ENCODE measurements at regions of chr11 and their contacts with region 1.

Region 1: GRCh38 chr11:68459886-68460740 is 439 bp upstream of the PPP6R3 start:
- DNase-seq: peak; percentile 90 to 97 (median 96)
- ATAC-seq: peak; percentile 95
- H3K4me3 ChIP-seq: peak overlapping the region; percentile 86
- H3K4me3 Mint-ChIP-seq: peak overlapping the region; percentile 81 to 98 (median 96)
- H3K27ac ChIP-seq: peak overlapping the region; percentile 90
- H3K27ac Mint-ChIP-seq: peak overlapping the region; percentile 92 to 99 (median 99)
- H3K4me1 ChIP-seq: peaks cover 19 to 26% of the 10 kb centered on the region in 2 donors
- H3K4me1 Mint-ChIP-seq: peaks cover 26 to 45% (median 31%) of the 10 kb centered on the region in 7 donors
- H3K27me3 ChIP-seq: no peaks in the 10 kb centered on the region
- H3K27me3 Mint-ChIP-seq: peaks cover 0 to 2% (median 0%) of the 10 kb centered on the region in 5 donors

Region 2: DNA sequence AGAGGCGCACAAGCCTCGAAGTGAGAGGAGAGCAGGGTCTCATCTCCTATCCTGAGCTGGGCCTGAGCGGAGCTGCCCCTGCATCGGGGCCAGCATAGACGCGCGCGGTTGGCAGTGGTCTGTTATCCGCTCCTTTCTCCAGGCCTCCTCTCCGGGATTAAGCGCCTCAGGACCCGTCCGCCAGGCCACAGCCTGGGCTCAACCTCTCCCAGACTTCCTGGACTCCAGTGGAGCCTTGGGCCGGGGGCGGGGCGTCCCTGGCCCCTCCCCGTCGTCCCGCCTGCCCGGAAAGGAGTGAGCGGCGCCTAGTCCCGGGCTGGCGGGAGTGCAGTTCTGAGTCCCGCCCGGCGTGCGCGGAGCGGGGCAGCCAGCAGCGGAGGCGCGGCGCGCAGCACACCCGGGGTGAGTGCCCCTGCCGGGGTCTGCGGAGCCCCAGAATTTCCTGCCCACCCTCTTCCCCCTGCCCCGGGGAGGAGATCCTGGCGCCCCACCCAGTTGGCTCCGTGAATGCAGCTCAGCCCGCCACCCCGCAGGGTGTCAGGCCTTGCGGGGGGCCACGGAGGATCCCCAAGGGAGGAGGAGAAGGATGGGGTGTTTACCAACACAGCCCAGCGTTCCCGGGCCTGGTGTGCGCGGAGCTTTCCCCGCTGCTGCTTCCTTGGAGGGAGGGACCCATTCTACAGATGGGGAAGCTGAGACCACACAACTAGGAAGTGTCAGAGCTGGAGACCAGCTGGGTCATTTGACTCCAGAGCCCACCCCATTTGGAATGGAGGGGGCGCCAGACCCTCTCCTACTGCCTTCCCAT is 421.2 kb before region 1 on chr11 and contains the start of gene TCIRG1:
- CTCF ChIA-PET with region 1: no interaction called
- POLR2A ChIA-PET with region 1: no interaction called
- intact Hi-C with region 1: loop called in 1 of 2 experiments (anchors 1 kb)
- DNase-seq: peak in 8 of 9 donors; percentile 28 to 72 (median 41)
- ATAC-seq: peak; percentile 53
- H3K4me3 ChIP-seq: peak within 1 kb of the TSS; percentile 84
- H3K4me3 Mint-ChIP-seq: peak within 1 kb of the TSS; percentile 87 to 94 (median 90)
- H3K27ac ChIP-seq: peak within 1 kb of the TSS; percentile 88
- H3K27ac Mint-ChIP-seq: peak within 1 kb of the TSS; percentile 92 to 98 (median 94)
- H3K4me1 ChIP-seq: peaks cover 8 to 20% of the 10 kb centered on the region in 2 donors
- H3K4me1 Mint-ChIP-seq: peaks cover 14 to 30% (median 25%) of the 10 kb centered on the region in 7 donors
- H3K27me3 ChIP-seq: no peaks in the 10 kb centered on the region
- H3K27me3 Mint-ChIP-seq: no peaks in the 10 kb centered on the region
- total RNA-seq, gene TCIRG1: 164 to 381 (median 194) TPM

Region 3: GRCh38 chr11:68271781-68272608 is 188.1 kb before region 1 on chr11 and contains the start of gene C11orf24:
- CTCF ChIA-PET with region 1: no interaction called
- POLR2A ChIA-PET with region 1: no interaction called
- intact Hi-C with region 1: loop called (anchors 1 kb)
- DNase-seq: peak; percentile 87 to 98 (median 90)
- ATAC-seq: peak; percentile 94
- H3K4me3 ChIP-seq: peak within 1 kb of the TSS; percentile 77
- H3K4me3 Mint-ChIP-seq: peak within 1 kb of the TSS; percentile 88 to 99 (median 94)
- H3K27ac ChIP-seq: peak within 1 kb of the TSS; percentile 94
- H3K27ac Mint-ChIP-seq: peak within 1 kb of the TSS; percentile 94 to 99 (median 96)
- H3K4me1 ChIP-seq: peaks cover 11 to 12% of the 10 kb centered on the region in 2 donors
- H3K4me1 Mint-ChIP-seq: peaks cover 23 to 50% (median 44%) of the 10 kb centered on the region in 7 donors
- H3K27me3 ChIP-seq: no peaks in the 10 kb centered on the region
- H3K27me3 Mint-ChIP-seq: no peaks in the 10 kb centered on the region
- total RNA-seq, gene C11orf24: 9.5 to 20.0 (median 15.4) TPM

Region 4: GRCh38 chr11:68436985-68437926 is 22.9 kb before region 1 on chr11:
- CTCF ChIA-PET with region 1: no interaction called
- POLR2A ChIA-PET with region 1: no interaction called
- intact Hi-C with region 1: no loop called
- DNase-seq: no peak
- ATAC-seq: peak; percentile 68
- H3K4me3 ChIP-seq: no peak overlapping the region
- H3K4me3 Mint-ChIP-seq: no peak overlapping the region
- H3K27ac ChIP-seq: no peak overlapping the region
- H3K27ac Mint-ChIP-seq: no peak overlapping the region
- H3K4me1 ChIP-seq: no peaks in the 10 kb centered on the region
- H3K4me1 Mint-ChIP-seq: peaks cover 0 to 4% (median 0%) of the 10 kb centered on the region in 7 donors
- H3K27me3 ChIP-seq: no peaks in the 10 kb centered on the region
- H3K27me3 Mint-ChIP-seq: no peaks in the 10 kb centered on the region

Region 5: DNA sequence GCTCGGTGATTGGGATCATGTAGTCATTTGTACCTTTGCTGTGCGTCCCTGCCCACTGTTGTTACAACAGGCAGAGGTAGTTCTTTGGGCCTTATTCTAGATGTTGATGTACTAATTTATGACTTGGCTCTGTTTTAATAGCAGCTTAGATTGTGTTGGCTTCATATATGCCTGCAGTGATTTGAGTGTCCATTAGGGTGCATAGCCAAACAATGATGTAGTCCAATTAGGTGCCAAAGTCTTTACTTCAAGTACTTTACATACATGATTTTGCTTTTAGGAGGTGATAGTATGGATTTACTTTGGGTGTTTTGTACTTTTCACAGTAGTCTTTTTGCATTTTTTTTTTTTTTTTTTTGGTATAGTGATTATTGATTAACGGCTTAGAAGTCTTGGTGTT is 46.8 kb after region 1 on chr11:
- CTCF ChIA-PET with region 1: no interaction called
- POLR2A ChIA-PET with region 1: no interaction called
- intact Hi-C with region 1: loop called in 1 of 2 experiments (anchors 5 kb)
- DNase-seq: no peak
- ATAC-seq: no peak
- H3K4me3 ChIP-seq: no peak overlapping the region
- H3K4me3 Mint-ChIP-seq: peak overlapping the region in 9 of 10 donors; percentile 1 to 59 (median 38)
- H3K27ac ChIP-seq: no peak overlapping the region
- H3K27ac Mint-ChIP-seq: peak overlapping the region in 6 of 9 donors; percentile 10 to 82 (median 56)
- H3K4me1 ChIP-seq: peaks cover 0 to 32% of the 10 kb centered on the region in 2 donors
- H3K4me1 Mint-ChIP-seq: peaks cover 52 to 94% (median 84%) of the 10 kb centered on the region in 7 donors
- H3K27me3 ChIP-seq: no peaks in the 10 kb centered on the region
- H3K27me3 Mint-ChIP-seq: no peaks in the 10 kb centered on the region

Region 6: DNA sequence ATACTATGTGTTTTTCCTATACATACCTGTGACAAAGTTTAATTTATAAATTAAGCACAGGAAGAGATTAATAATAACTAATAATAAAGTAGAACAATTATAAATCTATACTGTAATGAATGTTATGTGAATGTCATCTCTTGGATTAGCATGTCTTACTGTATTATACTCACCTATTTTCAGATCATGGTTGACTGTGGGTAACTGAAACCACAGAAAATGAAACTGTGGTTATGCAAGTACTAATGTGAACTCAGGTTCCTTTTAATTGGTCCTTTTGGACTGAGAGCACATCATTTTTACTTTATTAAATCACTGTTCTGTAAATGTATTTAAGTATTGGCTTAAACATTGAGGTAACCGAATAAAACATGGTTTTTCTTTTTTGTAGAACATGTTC is 109.2 kb after region 1 on chr11:
- CTCF ChIA-PET with region 1: no interaction called
- POLR2A ChIA-PET with region 1: no interaction called
- intact Hi-C with region 1: loop called in 1 of 2 experiments (anchors 5 kb)
- DNase-seq: no peak
- ATAC-seq: no peak
- H3K4me3 ChIP-seq: no peak overlapping the region
- H3K4me3 Mint-ChIP-seq: no peak overlapping the region
- H3K27ac ChIP-seq: no peak overlapping the region
- H3K27ac Mint-ChIP-seq: peak overlapping the region in 1 of 9 donors; percentile 23
- H3K4me1 ChIP-seq: no peaks in the 10 kb centered on the region
- H3K4me1 Mint-ChIP-seq: peaks cover 15 to 48% (median 34%) of the 10 kb centered on the region in 7 donors
- H3K27me3 ChIP-seq: no peaks in the 10 kb centered on the region
- H3K27me3 Mint-ChIP-seq: no peaks in the 10 kb centered on the region

Region 7: GRCh38 chr11:68903288-68904247 is 443.5 kb after region 1 on chr11 and contains the starts of genes IGHMBP2 and MRPL21:
- CTCF ChIA-PET with region 1: no interaction called
- POLR2A ChIA-PET with region 1: no interaction called
- intact Hi-C with region 1: loop called in 1 of 2 experiments (anchors 5 kb)
- DNase-seq: peak; percentile 70 to 90 (median 83)
- ATAC-seq: peak; percentile 99
- H3K4me3 ChIP-seq: peak within 1 kb of the TSS; percentile 91
- H3K4me3 Mint-ChIP-seq: peak within 1 kb of the TSS; percentile 90 to 98 (median 96)
- H3K27ac ChIP-seq: peak within 1 kb of the TSS; percentile 90
- H3K27ac Mint-ChIP-seq: peak within 1 kb of the TSS; percentile 89 to 95 (median 93)
- H3K4me1 ChIP-seq: peaks cover 21% of the 10 kb centered on the region in 2 donors
- H3K4me1 Mint-ChIP-seq: peaks cover 35 to 62% (median 48%) of the 10 kb centered on the region in 7 donors
- H3K27me3 ChIP-seq: no peaks in the 10 kb centered on the region
- H3K27me3 Mint-ChIP-seq: no peaks in the 10 kb centered on the region
- total RNA-seq, gene IGHMBP2: 27.5 to 41.4 (median 32.2) TPM
- total RNA-seq, gene MRPL21: 29.6 to 71.1 (median 37.9) TPM

Measured in naive thymus-derived CD4-positive, alpha-beta T cell (primary cell).